Panc1 (cell line): ENCODE measurements at regions of chr19 and their contacts with region 1.

Region 1: DNA sequence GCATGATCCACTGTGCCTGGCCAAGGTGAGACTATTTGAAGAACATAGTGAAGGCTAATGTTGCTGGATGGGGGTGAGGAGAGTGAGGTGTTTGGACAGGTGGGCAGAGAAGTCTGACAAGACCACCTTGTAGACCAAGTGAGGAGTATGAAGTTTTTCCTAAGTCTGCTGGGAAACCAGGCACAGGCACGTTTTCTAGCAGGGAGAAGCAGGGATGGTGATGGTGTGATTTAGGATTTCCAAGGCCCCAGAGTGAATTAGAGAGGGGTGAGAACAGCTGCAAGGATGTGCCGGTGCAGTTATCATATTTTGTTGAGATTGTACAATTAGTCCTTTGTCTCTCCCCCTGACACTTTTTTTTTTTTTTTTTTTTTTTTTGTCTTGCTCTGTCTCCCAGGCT is 5.6 kb upstream of the PKN1 start:
- DNase-seq: no peak
- ATAC-seq: no peak
- H3K4me3 ChIP-seq: no peak overlapping the region
- H3K27ac ChIP-seq: no peak overlapping the region
- H3K4me1 ChIP-seq: no peaks in the 10 kb centered on the region
- H3K27me3 ChIP-seq: no peaks in the 10 kb centered on the region
- CTCF ChIP-seq: no peak

Region 2: GRCh38 chr19:14404312-14404711 is 23.1 kb before region 1 on chr19:
- CTCF ChIA-PET with region 1: no interaction called
- POLR2A ChIA-PET with region 1: no interaction called
- in situ Hi-C with region 1: no loop called
- intact Hi-C with region 1: no loop called
- DNase-seq: no peak
- ATAC-seq: no peak
- H3K4me3 ChIP-seq: no peak overlapping the region
- H3K27ac ChIP-seq: no peak overlapping the region
- H3K4me1 ChIP-seq: peaks cover 13% of the 10 kb centered on the region
- H3K27me3 ChIP-seq: no peaks in the 10 kb centered on the region
- CTCF ChIP-seq: no peak

Region 3: DNA sequence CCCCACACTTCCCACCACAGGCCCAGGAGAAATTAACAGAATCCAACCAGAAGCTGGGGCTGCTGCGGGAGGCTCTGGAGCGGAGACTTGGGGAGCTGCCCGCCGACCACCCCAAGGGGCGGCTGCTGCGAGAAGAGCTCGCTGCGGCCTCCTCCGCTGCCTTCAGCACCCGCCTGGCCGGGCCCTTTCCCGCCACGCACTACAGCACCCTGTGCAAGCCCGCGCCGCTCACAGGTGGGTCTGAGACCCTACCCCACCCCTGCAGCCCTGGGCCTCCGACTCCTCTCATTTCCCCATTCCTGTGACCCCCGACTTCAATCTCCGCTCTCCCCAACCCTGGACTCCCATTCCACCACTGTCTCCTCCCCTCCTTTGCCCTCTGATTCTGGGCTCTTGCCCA is 23.4 kb after region 1 on chr19:
- CTCF ChIA-PET with region 1: no interaction called
- POLR2A ChIA-PET with region 1: interaction called, 12 read pairs
- in situ Hi-C with region 1: no loop called
- intact Hi-C with region 1: no loop called
- DNase-seq: no peak
- ATAC-seq: peak; percentile 16; the same call in 1 of the 2 replicates
- H3K4me3 ChIP-seq: no peak overlapping the region
- H3K27ac ChIP-seq: no peak overlapping the region
- H3K4me1 ChIP-seq: no peaks in the 10 kb centered on the region
- H3K27me3 ChIP-seq: no peaks in the 10 kb centered on the region
- CTCF ChIP-seq: no peak